ENCODE measurements at regions of chr1 and their contacts with region 1.

Region 1: GRCh38 chr1:205791568-205792180 is 16.4 kb upstream of the RAB29 start:
- H3K4me3 ChIP-seq: no peak overlapping the region
- H3K27ac ChIP-seq: no peak overlapping the region
- H3K4me1 ChIP-seq: 0 out of 2 replicates have a peak, but pooled peaks cover under 1% of the 10 kb centered on the region
- CTCF ChIP-seq: peak; percentile 79

Region 2: GRCh38 chr1:205680073-205680851 is 111.4 kb before region 1 on chr1 and contains the start of gene SLC45A3:
- CTCF ChIA-PET with region 1: no interaction called
- POLR2A ChIA-PET with region 1: no interaction called
- H3K4me3 ChIP-seq: peak within 1 kb of the TSS; percentile 67
- H3K27ac ChIP-seq: peak within 1 kb of the TSS; percentile 58; the same call in 1 of the 2 replicates
- H3K4me1 ChIP-seq: no peaks in the 10 kb centered on the region
- CTCF ChIP-seq: no peak

Region 3: DNA sequence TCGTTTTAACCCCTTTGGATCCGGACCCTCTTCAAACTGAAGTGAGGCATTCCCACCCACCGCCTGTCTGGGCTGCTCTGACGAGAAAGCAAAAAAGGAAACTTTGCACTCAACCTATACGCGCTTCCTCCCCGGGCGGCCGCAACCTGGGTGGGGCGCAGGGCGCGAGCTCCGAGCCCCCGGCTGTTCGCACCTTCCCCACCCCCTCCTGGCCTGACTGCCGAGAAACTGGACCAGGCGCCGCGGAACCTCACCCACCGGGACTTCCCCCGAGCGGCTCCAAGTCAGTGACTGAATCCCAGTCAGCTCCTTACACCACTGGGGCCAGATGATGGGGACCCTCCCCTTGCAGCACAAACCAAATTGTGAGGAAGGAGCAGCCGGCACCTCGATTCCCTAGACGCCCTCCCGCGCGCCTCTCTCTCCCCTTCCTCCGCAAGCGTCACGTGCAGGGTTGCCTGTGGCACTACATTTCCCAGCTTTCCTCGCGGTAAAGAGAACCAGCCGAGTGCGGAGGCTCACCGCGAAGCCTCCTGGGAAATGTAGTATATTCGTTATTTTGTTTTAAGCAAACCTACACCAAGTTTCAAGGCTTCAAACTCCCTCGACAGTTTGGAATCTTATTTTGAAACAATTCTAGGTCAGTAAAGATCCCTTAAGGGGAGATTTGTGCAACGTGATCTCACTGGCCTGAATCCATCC is 16.5 kb before region 1 on chr1 and contains the start of gene RAB29:
- CTCF ChIA-PET with region 1: interaction called, 14 read pairs
- POLR2A ChIA-PET with region 1: no interaction called
- H3K4me3 ChIP-seq: peak within 1 kb of the TSS; percentile 70
- H3K27ac ChIP-seq: no peak within 1 kb of the TSS; the same call in 1 of the 2 replicates
- H3K4me1 ChIP-seq: no peaks in the 10 kb centered on the region
- CTCF ChIP-seq: 0 out of 2 replicates have a peak, but pooled peaks have one; percentile 14

Region 4: GRCh38 chr1:205805082-205805712 is 13.5 kb after region 1 on chr1:
- CTCF ChIA-PET with region 1: interaction called, 18 read pairs
- POLR2A ChIA-PET with region 1: no interaction called
- H3K4me3 ChIP-seq: no peak overlapping the region
- H3K27ac ChIP-seq: no peak overlapping the region
- H3K4me1 ChIP-seq: peaks cover 6% of the 10 kb centered on the region; the same call in 1 of the 2 replicates
- CTCF ChIP-seq: no peak

Region 5: GRCh38 chr1:205907794-205908193 is 116.1 kb after region 1 on chr1:
- CTCF ChIA-PET with region 1: interaction called, 31 read pairs
- POLR2A ChIA-PET with region 1: no interaction called
- H3K4me3 ChIP-seq: no peak overlapping the region
- H3K27ac ChIP-seq: no peak overlapping the region
- H3K4me1 ChIP-seq: no peaks in the 10 kb centered on the region
- CTCF ChIP-seq: no peak

Measured in HEK293 (cell line).